ENCODE measurements at regions of chr11 and their contacts with region 1.

Region 1: DNA sequence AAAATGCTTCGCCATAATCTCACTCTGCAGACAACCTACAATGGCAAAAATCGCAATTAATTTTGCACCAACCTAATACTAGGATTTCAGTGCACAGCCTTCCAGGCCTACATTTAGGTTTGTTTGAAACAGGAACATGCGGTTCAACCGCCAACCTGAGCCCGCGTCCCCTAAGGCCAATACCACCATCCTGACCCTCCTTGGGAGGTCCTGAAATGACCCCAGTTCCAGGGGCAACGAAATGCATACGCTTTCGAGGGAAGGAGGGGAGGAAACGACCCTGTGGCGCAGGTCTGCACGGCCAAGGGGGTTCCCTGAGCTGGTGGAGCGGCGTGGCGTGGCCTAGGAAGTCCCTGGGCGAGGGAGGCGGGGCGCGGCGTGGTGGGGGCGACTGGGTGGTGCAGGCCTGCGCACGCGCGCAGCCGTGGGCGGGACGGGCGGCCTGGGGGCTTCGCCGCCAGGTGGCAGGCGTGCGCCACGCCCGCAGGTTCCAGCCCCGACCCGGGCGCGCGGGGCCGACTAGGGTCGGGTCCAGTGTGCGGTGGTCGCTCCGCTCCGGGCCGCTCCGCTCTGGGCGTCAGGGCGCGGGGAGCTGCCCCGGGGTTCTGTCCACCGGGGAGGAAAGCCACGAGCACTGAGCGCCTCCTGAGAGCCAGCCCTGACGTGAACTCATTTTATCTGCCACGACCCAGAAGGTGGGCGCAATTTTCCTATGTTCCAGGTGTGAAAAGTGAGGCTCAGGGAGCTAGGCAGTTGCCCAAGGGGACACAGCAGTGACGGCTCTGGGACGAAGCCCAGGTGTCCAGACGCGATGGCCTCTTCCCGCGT is 94.1 kb downstream of the SWAP70 start:
- DNase-seq: peak; percentile 91
- H3K4me3 ChIP-seq: peak overlapping the region; percentile 69
- H3K27ac ChIP-seq: peak overlapping the region; percentile 79
- H3K4me1 ChIP-seq: peaks cover 14% of the 10 kb centered on the region
- H3K27me3 ChIP-seq: no peaks in the 10 kb centered on the region
- CTCF ChIP-seq: peak; percentile 75

Region 2: GRCh38 chr11:9534791-9535781 is 222.9 kb before region 1 on chr11:
- intact Hi-C with region 1: loop called (anchors 10 kb)
- DNase-seq: peak; percentile 84
- H3K4me3 ChIP-seq: no peak overlapping the region
- H3K27ac ChIP-seq: no peak overlapping the region
- H3K4me1 ChIP-seq: no peaks in the 10 kb centered on the region
- H3K27me3 ChIP-seq: no peaks in the 10 kb centered on the region
- CTCF ChIP-seq: peak; percentile 80

Region 3: DNA sequence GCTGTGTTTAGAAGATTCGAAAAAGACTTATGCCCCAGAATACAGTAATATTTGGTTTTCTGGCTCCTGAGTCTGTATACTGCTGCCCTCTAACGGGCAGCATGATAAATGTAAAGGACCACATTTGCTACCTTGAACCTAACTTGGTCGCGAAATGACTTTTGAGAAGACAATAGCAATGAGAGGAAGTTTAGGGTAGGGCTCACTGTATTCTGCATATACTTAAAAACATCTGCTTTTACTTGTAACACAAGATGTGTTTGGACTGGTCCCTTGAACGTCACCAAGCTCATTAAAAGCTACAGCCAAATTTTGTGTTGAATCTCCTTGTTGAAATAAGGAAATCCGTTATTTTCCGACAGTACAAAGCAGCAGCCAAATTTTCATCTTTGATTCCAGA is 215.0 kb after region 1 on chr11:
- intact Hi-C with region 1: loop called (anchors 5 kb)
- DNase-seq: no peak
- H3K4me3 ChIP-seq: no peak overlapping the region
- H3K27ac ChIP-seq: no peak overlapping the region
- H3K4me1 ChIP-seq: no peaks in the 10 kb centered on the region
- H3K27me3 ChIP-seq: no peaks in the 10 kb centered on the region
- CTCF ChIP-seq: peak; percentile 56

Region 4: GRCh38 chr11:10322830-10323792 is 565.1 kb after region 1 on chr11:
- intact Hi-C with region 1: loop called (anchors 5 kb)
- DNase-seq: peak; percentile 79
- H3K4me3 ChIP-seq: no peak overlapping the region
- H3K27ac ChIP-seq: peak overlapping the region; percentile 58
- H3K4me1 ChIP-seq: peaks cover 10% of the 10 kb centered on the region
- H3K27me3 ChIP-seq: no peaks in the 10 kb centered on the region
- CTCF ChIP-seq: peak; percentile 45

Measured in colonic mucosa (tissue), 4 donors.